CD4-positive, alpha-beta memory T cell (primary cell): ENCODE measurements at regions of chr5 and their contacts with region 1.

Region 1: GRCh38 chr5:112784726-112785125 is 47.0 kb downstream of the APC start:
- DNase-seq: no peak
- H3K4me3 ChIP-seq: no peak overlapping the region
- H3K4me3 Mint-ChIP-seq: no peak overlapping the region
- H3K27ac ChIP-seq: no peak overlapping the region
- H3K27ac Mint-ChIP-seq: no peak overlapping the region
- H3K4me1 ChIP-seq: no peaks in the 10 kb centered on the region
- H3K4me1 Mint-ChIP-seq: no peaks in the 10 kb centered on the region
- H3K27me3 ChIP-seq: no peaks in the 10 kb centered on the region
- H3K27me3 Mint-ChIP-seq: no peaks in the 10 kb centered on the region

Region 2: GRCh38 chr5:112795944-112796678 is 11.4 kb after region 1 on chr5:
- CTCF ChIA-PET with region 1: no interaction called
- POLR2A ChIA-PET with region 1: no interaction called
- intact Hi-C with region 1: no loop called
- DNase-seq: no peak
- H3K4me3 ChIP-seq: no peak overlapping the region
- H3K4me3 Mint-ChIP-seq: no peak overlapping the region
- H3K27ac ChIP-seq: no peak overlapping the region
- H3K27ac Mint-ChIP-seq: peak overlapping the region in 2 of 7 donors; percentile 19 to 76
- H3K4me1 ChIP-seq: no peaks in the 10 kb centered on the region
- H3K4me1 Mint-ChIP-seq: peaks cover 0 to 8% (median 3%) of the 10 kb centered on the region in 4 donors
- H3K27me3 ChIP-seq: no peaks in the 10 kb centered on the region
- H3K27me3 Mint-ChIP-seq: no peaks in the 10 kb centered on the region

Region 3: DNA sequence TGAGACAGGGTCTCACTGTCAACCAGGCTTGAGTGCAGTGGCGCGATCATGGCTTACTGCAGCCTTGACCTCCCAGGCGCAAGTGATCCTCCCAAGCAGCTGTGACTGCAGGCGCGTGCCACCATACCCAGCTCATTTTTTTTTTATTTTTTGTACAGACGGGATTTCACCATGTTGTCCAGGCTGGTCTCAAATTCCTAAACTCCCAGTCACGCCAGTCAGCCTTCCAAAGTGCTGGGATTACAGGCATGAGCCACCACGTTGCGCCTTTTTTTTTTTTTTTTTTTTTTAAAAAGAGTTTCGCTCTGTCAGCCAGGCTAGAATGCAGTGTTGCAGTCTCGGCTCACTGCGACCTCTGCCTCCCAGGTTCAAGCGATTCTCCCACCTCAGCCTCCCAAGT is 49.2 kb after region 1 on chr5:
- CTCF ChIA-PET with region 1: interaction called, 3 read pairs
- POLR2A ChIA-PET with region 1: no interaction called
- intact Hi-C with region 1: loop called (anchors 5 kb)
- DNase-seq: no peak
- H3K4me3 ChIP-seq: no peak overlapping the region
- H3K4me3 Mint-ChIP-seq: no peak overlapping the region
- H3K27ac ChIP-seq: no peak overlapping the region
- H3K27ac Mint-ChIP-seq: no peak overlapping the region
- H3K4me1 ChIP-seq: no peaks in the 10 kb centered on the region
- H3K4me1 Mint-ChIP-seq: peaks cover 0 to 1% (median 0%) of the 10 kb centered on the region in 4 donors
- H3K27me3 ChIP-seq: no peaks in the 10 kb centered on the region
- H3K27me3 Mint-ChIP-seq: no peaks in the 10 kb centered on the region

Region 4: GRCh38 chr5:112860929-112861637 is 76.4 kb after region 1 on chr5 and contains the start of gene SRP19:
- CTCF ChIA-PET with region 1: no interaction called
- POLR2A ChIA-PET with region 1: no interaction called
- intact Hi-C with region 1: no loop called
- DNase-seq: peak; percentile 90 to 93 (median 92)
- H3K4me3 ChIP-seq: peak within 1 kb of the TSS; percentile 71 to 95
- H3K4me3 Mint-ChIP-seq: peak within 1 kb of the TSS; percentile 96 to 98 (median 97)
- H3K27ac ChIP-seq: peak within 1 kb of the TSS; percentile 97
- H3K27ac Mint-ChIP-seq: peak within 1 kb of the TSS; percentile 98 to 99 (median 98)
- H3K4me1 ChIP-seq: peaks cover 32% of the 10 kb centered on the region
- H3K4me1 Mint-ChIP-seq: peaks cover 19 to 36% (median 30%) of the 10 kb centered on the region in 4 donors
- H3K27me3 ChIP-seq: no peaks in the 10 kb centered on the region
- H3K27me3 Mint-ChIP-seq: peaks cover 6 to 8% of the 10 kb centered on the region in 2 donors
- total RNA-seq, gene SRP19: 51.4 to 54.4 TPM